CD14-positive monocyte (primary cell): ENCODE measurements at regions of chr13 and their contacts with region 1.

Region 1: GRCh38 chr13:20924758-20925394 is 22.3 kb upstream of the XPO4 start:
- DNase-seq: peak; percentile 22 to 49 (median 47)
- H3K4me3 ChIP-seq: no peak overlapping the region
- H3K4me3 Mint-ChIP-seq: no peak overlapping the region
- H3K27ac ChIP-seq: no peak overlapping the region
- H3K27ac Mint-ChIP-seq: no peak overlapping the region
- H3K4me1 ChIP-seq: no peaks in the 10 kb centered on the region
- H3K4me1 Mint-ChIP-seq: no peaks in the 10 kb centered on the region
- H3K27me3 ChIP-seq: no peaks in the 10 kb centered on the region
- H3K27me3 Mint-ChIP-seq: peaks cover 0 to 7% (median 4%) of the 10 kb centered on the region in 3 donors
- CTCF ChIP-seq: peak; percentile 86

Region 2: DNA sequence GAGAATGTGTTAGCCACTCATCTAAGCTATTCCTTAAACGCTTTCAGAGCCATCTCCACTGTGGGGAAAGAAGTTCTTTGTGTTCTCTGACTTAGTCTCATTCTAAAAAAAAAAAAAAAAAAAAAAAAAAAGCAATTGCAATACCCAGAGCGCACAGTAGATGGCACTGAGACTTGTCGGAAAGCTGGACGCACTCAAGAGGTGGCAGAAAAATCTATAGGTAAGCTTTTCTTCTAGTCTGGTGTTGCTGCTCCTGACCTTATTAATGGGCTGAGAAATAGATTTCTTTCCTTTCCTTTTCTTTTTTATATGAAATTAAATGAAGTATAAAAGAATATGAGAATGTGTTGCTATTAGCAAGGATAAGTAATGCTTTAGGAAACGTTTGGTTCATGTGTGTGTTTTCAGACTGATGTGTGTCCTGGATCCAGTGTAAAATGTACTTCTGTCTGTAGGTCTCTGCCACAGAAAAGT is 727.5 kb before region 1 on chr13:
- intact Hi-C with region 1: loop called in 1 of 2 experiments (anchors 10 kb)
- DNase-seq: peak; percentile 19 to 53 (median 47)
- H3K4me3 ChIP-seq: no peak overlapping the region
- H3K4me3 Mint-ChIP-seq: no peak overlapping the region
- H3K27ac ChIP-seq: no peak overlapping the region
- H3K27ac Mint-ChIP-seq: peak overlapping the region in 1 of 7 donors; percentile 49
- H3K4me1 ChIP-seq: peaks cover 31 to 32% of the 10 kb centered on the region in 2 donors
- H3K4me1 Mint-ChIP-seq: peaks cover 33% of the 10 kb centered on the region
- H3K27me3 ChIP-seq: peaks cover 35% of the 10 kb centered on the region in 2 donors
- H3K27me3 Mint-ChIP-seq: peaks cover 26 to 41% (median 39%) of the 10 kb centered on the region in 3 donors
- CTCF ChIP-seq: peak; percentile 89

Region 3: DNA sequence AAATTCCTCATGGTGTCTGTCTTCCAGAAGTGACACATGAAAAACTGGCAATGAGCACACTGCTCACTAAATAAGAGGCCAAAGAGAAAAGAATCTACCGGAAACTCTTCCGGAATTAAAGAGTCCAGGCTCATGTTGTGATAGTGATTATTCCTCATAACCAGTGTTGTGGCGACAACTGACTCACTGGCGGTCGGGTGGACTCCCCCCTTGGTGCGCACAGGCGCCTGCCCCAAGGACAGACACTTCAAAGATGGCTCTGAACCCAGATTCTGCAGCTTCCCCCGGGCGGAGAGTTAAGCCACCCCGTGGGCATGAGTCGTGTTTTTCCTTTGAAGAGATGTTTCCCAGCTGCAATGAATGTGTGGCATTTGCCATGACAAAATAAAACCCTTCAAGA is 211.1 kb before region 1 on chr13:
- intact Hi-C with region 1: loop called in 1 of 2 experiments (anchors 10 kb)
- DNase-seq: no peak
- H3K4me3 ChIP-seq: no peak overlapping the region
- H3K4me3 Mint-ChIP-seq: no peak overlapping the region
- H3K27ac ChIP-seq: no peak overlapping the region
- H3K27ac Mint-ChIP-seq: no peak overlapping the region
- H3K4me1 ChIP-seq: no peaks in the 10 kb centered on the region
- H3K4me1 Mint-ChIP-seq: peaks cover 6% of the 10 kb centered on the region
- H3K27me3 ChIP-seq: peaks cover 0 to 2% of the 10 kb centered on the region in 2 donors
- H3K27me3 Mint-ChIP-seq: peaks cover 6 to 22% (median 6%) of the 10 kb centered on the region in 3 donors
- CTCF ChIP-seq: no peak

Region 4: DNA sequence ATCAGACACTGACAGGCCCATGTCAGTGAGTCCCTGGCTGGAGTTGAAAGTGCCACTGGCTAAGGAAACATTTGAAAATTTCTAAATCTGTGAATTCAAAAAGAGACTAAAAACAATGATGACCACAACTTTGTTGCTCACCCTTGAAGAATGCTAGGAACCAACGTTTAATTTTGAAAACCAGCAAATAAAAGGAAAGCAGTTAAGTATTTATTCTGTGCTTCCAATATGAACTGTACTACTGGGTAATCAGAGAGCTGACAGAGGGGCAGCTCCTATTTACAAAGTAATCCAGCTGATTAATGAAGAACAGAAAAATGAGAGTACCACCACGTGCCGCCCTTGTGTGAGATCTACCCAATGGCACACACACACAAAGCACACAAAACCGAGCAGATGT is 181.2 kb after region 1 on chr13:
- intact Hi-C with region 1: no loop called
- DNase-seq: no peak
- H3K4me3 ChIP-seq: no peak overlapping the region
- H3K4me3 Mint-ChIP-seq: no peak overlapping the region
- H3K27ac ChIP-seq: no peak overlapping the region
- H3K27ac Mint-ChIP-seq: peak overlapping the region in 1 of 7 donors; percentile 46
- H3K4me1 ChIP-seq: no peaks in the 10 kb centered on the region
- H3K4me1 Mint-ChIP-seq: peaks cover 4% of the 10 kb centered on the region
- H3K27me3 ChIP-seq: no peaks in the 10 kb centered on the region
- H3K27me3 Mint-ChIP-seq: peaks cover 0 to 2% (median 0%) of the 10 kb centered on the region in 3 donors
- CTCF ChIP-seq: no peak